Naive thymus-derived CD4-positive, alpha-beta T cell (primary cell): ENCODE measurements at regions of chr12 and their contacts with region 1.

Region 1: GRCh38 chr12:70719672-70720420 is 82.6 kb upstream of the PTPRB start:
- DNase-seq: peak in 5 of 9 donors; percentile 6 to 36 (median 18)
- ATAC-seq: peak; percentile 67
- H3K4me3 ChIP-seq: no peak overlapping the region
- H3K4me3 Mint-ChIP-seq: peak overlapping the region in 8 of 10 donors; percentile 57 to 77 (median 70)
- H3K27ac ChIP-seq: no peak overlapping the region
- H3K27ac Mint-ChIP-seq: peak overlapping the region in 1 of 9 donors; percentile 53
- H3K4me1 ChIP-seq: no peaks in the 10 kb centered on the region
- H3K4me1 Mint-ChIP-seq: peaks cover 5 to 19% (median 8%) of the 10 kb centered on the region in 7 donors
- H3K27me3 ChIP-seq: no peaks in the 10 kb centered on the region
- H3K27me3 Mint-ChIP-seq: peaks cover 3 to 38% (median 10%) of the 10 kb centered on the region in 5 donors

Region 2: GRCh38 chr12:69900720-69901131 is 819.1 kb before region 1 on chr12:
- CTCF ChIA-PET with region 1: interaction called, 4 read pairs
- POLR2A ChIA-PET with region 1: no interaction called
- intact Hi-C with region 1: loop called (anchors 1 kb)
- DNase-seq: peak; percentile 23 to 67 (median 50)
- ATAC-seq: peak; percentile 56
- H3K4me3 ChIP-seq: no peak overlapping the region
- H3K4me3 Mint-ChIP-seq: no peak overlapping the region
- H3K27ac ChIP-seq: no peak overlapping the region
- H3K27ac Mint-ChIP-seq: no peak overlapping the region
- H3K4me1 ChIP-seq: no peaks in the 10 kb centered on the region
- H3K4me1 Mint-ChIP-seq: peaks cover 0 to 2% (median 0%) of the 10 kb centered on the region in 7 donors
- H3K27me3 ChIP-seq: no peaks in the 10 kb centered on the region
- H3K27me3 Mint-ChIP-seq: peaks cover 0 to 4% (median 2%) of the 10 kb centered on the region in 5 donors

Region 3: GRCh38 chr12:70590051-70590450 is 129.8 kb before region 1 on chr12:
- CTCF ChIA-PET with region 1: no interaction called
- POLR2A ChIA-PET with region 1: no interaction called
- intact Hi-C with region 1: loop called in 1 of 2 experiments (anchors 1 kb)
- DNase-seq: peak; percentile 7 to 45 (median 22)
- ATAC-seq: peak; percentile 67
- H3K4me3 ChIP-seq: no peak overlapping the region
- H3K4me3 Mint-ChIP-seq: no peak overlapping the region
- H3K27ac ChIP-seq: no peak overlapping the region
- H3K27ac Mint-ChIP-seq: no peak overlapping the region
- H3K4me1 ChIP-seq: no peaks in the 10 kb centered on the region
- H3K4me1 Mint-ChIP-seq: peaks cover 0 to 6% (median 0%) of the 10 kb centered on the region in 7 donors
- H3K27me3 ChIP-seq: peaks cover 4 to 6% of the 10 kb centered on the region in 2 donors
- H3K27me3 Mint-ChIP-seq: peaks cover 3 to 43% (median 24%) of the 10 kb centered on the region in 5 donors

Region 4: DNA sequence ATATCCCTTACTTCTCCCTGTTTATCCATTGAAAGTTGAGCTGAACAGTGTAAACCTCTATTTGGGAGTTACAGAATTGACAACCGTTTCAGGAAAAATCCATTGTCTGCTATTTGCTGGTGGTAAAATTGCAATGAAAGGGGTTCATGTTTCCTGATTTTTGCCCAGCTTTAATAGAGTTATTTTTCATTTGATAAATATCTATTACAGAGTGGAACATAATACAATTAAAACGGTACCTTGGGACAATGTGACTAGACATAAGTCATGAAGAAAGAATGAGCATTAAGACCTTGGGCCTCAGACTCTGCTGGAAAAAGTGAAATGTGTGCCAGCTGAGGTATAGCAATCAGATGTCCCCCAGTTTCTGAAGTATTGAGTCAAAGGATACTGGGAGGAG is 187.6 kb after region 1 on chr12:
- CTCF ChIA-PET with region 1: no interaction called
- POLR2A ChIA-PET with region 1: no interaction called
- intact Hi-C with region 1: no loop called
- DNase-seq: no peak
- ATAC-seq: no peak
- H3K4me3 ChIP-seq: no peak overlapping the region
- H3K4me3 Mint-ChIP-seq: no peak overlapping the region
- H3K27ac ChIP-seq: no peak overlapping the region
- H3K27ac Mint-ChIP-seq: no peak overlapping the region
- H3K4me1 ChIP-seq: no peaks in the 10 kb centered on the region
- H3K4me1 Mint-ChIP-seq: no peaks in the 10 kb centered on the region
- H3K27me3 ChIP-seq: peaks cover 0 to 2% of the 10 kb centered on the region in 2 donors
- H3K27me3 Mint-ChIP-seq: peaks cover 0 to 5% (median 0%) of the 10 kb centered on the region in 5 donors